ENCODE measurements at regions of chr22 and their contacts with region 1.

Region 1: DNA sequence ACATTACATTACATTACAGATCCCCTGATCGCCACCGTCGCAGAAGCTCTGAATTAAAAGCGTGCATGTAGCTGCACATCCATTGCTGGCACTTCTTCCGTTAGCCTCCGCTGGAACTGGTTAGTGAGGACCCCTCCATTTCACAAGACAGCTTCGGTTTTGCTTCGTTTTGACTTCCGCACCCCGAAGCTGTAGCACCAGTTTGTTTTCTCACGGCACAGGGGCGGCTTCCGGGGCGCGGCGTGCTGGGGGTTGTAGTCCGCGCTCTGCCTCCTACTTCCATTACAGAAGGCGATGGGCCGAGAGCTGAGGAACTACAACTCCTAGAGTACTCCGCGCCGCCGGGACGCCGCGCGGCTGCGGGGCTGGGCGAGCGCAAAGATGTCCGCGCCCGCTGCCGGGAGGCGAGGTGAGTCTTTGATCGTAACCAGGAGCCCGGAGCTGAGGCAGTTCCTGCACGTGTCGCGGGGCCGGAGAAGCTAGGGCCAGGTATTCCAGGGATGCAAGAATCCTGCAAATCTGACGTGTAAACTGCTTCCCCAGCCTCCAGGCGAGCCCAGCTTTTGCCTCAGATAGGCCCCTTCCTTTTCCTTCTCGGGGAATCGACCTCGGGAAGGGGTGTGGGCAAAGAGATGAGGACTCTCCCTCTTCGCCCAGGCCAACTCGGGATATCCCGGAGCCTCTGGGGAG is at the start of gene PEX26:
- DNase-seq: peak; percentile 84
- ATAC-seq: peak; percentile 96
- H3K4me3 ChIP-seq: peak within 1 kb of the TSS; percentile 92
- H3K27ac ChIP-seq: peak within 1 kb of the TSS; percentile 94
- H3K4me1 ChIP-seq: no peaks in the 10 kb centered on the region
- H3K27me3 ChIP-seq: no peaks in the 10 kb centered on the region
- CTCF ChIP-seq: no peak
- EP300 ChIP-seq: no peak
- POLR2A ChIP-seq: peak; percentile 90
- RAD21 ChIP-seq: no peak
- polyA plus RNA-seq, gene PEX26: 0.79 to 1.1 TPM

Region 2: GRCh38 chr22:17754233-17754925 is 323.4 kb before region 1 on chr22:
- CTCF ChIA-PET with region 1: no interaction called
- POLR2A ChIA-PET with region 1: interaction called, 10 read pairs
- RAD21 ChIA-PET with region 1: interaction called, 6 read pairs
- SMC1A ChIA-PET with region 1: interaction called, 4 read pairs
- in situ Hi-C with region 1: no loop called
- intact Hi-C with region 1: no loop called
- DNase-seq: no peak
- ATAC-seq: peak; percentile 82
- H3K4me3 ChIP-seq: no peak overlapping the region
- H3K27ac ChIP-seq: no peak overlapping the region
- H3K4me1 ChIP-seq: no peaks in the 10 kb centered on the region
- H3K27me3 ChIP-seq: no peaks in the 10 kb centered on the region
- CTCF ChIP-seq: peak; percentile 30 to 57 (median 52); a peak in 4 of 6 replicates
- EP300 ChIP-seq: no peak
- POLR2A ChIP-seq: no peak
- RAD21 ChIP-seq: peak; percentile 45; the same call in 1 of the 2 replicates

Region 3: GRCh38 chr22:17830043-17830961 is 247.5 kb before region 1 on chr22:
- CTCF ChIA-PET with region 1: interaction called, 167 read pairs
- POLR2A ChIA-PET with region 1: interaction called, 5 read pairs
- RAD21 ChIA-PET with region 1: interaction called, 77 read pairs
- SMC1A ChIA-PET with region 1: interaction called, 93 read pairs
- in situ Hi-C with region 1: no loop called
- intact Hi-C with region 1: loop called (anchors 1 kb)
- DNase-seq: peak; percentile 51
- ATAC-seq: peak; percentile 97
- H3K4me3 ChIP-seq: no peak overlapping the region
- H3K27ac ChIP-seq: no peak overlapping the region
- H3K4me1 ChIP-seq: no peaks in the 10 kb centered on the region
- H3K27me3 ChIP-seq: no peaks in the 10 kb centered on the region
- CTCF ChIP-seq: peak; percentile 98 to 99 (median 98)
- EP300 ChIP-seq: no peak
- POLR2A ChIP-seq: no peak
- RAD21 ChIP-seq: peak; percentile 97

Region 4: GRCh38 chr22:17964643-17965042 is 113.1 kb before region 1 on chr22:
- CTCF ChIA-PET with region 1: interaction called, 11 read pairs
- POLR2A ChIA-PET with region 1: no interaction called
- RAD21 ChIA-PET with region 1: interaction called, 16 read pairs
- SMC1A ChIA-PET with region 1: interaction called, 24 read pairs
- in situ Hi-C with region 1: no loop called
- intact Hi-C with region 1: loop called (anchors 2 kb)
- DNase-seq: peak; percentile 65
- ATAC-seq: peak; percentile 95
- H3K4me3 ChIP-seq: peak overlapping the region; percentile 41; the same call in 1 of the 2 replicates
- H3K27ac ChIP-seq: peak overlapping the region; percentile 67
- H3K4me1 ChIP-seq: peaks cover 28% of the 10 kb centered on the region
- H3K27me3 ChIP-seq: no peaks in the 10 kb centered on the region
- CTCF ChIP-seq: peak in 1 of 3 experiments; percentile 8; a peak in 1 of 6 replicates
- EP300 ChIP-seq: peak in 1 of 2 experiments; percentile 34; a peak in 1 of 4 replicates
- POLR2A ChIP-seq: peak; percentile 50; the same call in 1 of the 2 replicates
- RAD21 ChIP-seq: peak; percentile 34

Region 5: DNA sequence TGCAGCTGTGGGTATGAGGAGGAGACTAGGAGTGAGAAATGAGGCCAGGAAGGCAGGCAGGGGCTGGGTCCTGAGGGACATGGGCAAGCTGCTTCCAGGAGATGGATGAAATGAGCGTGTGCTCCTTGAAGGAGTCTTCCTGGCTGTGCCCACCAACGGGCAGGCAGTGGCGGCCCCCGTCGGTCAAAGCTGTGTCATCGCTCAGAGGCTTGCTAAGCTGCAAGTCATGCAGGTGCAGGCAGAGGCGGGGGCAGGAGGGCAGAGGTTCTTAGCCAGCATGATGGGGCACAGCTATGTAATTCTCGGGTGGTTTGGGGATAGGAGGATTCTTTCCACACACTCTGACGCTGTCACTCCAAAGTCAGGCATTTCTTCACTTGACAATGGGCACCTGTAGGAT is 12.5 kb before region 1 on chr22:
- CTCF ChIA-PET with region 1: interaction called, 34 read pairs
- POLR2A ChIA-PET with region 1: interaction called, 8 read pairs
- RAD21 ChIA-PET with region 1: interaction called, 40 read pairs
- SMC1A ChIA-PET with region 1: interaction called, 51 read pairs
- in situ Hi-C with region 1: no loop called
- intact Hi-C with region 1: no loop called
- DNase-seq: no peak
- ATAC-seq: peak; percentile 30
- H3K4me3 ChIP-seq: no peak overlapping the region
- H3K27ac ChIP-seq: no peak overlapping the region
- H3K4me1 ChIP-seq: peaks cover 17% of the 10 kb centered on the region
- H3K27me3 ChIP-seq: no peaks in the 10 kb centered on the region
- CTCF ChIP-seq: peak in 1 of 3 experiments; percentile 19; a peak in 1 of 6 replicates
- EP300 ChIP-seq: no peak
- POLR2A ChIP-seq: no peak
- RAD21 ChIP-seq: no peak

Region 6: GRCh38 chr22:18133452-18133851 is 55.7 kb after region 1 on chr22:
- CTCF ChIA-PET with region 1: no interaction called
- POLR2A ChIA-PET with region 1: no interaction called
- RAD21 ChIA-PET with region 1: no interaction called
- SMC1A ChIA-PET with region 1: no interaction called
- in situ Hi-C with region 1: no loop called
- intact Hi-C with region 1: no loop called
- DNase-seq: no peak
- ATAC-seq: no peak
- H3K4me3 ChIP-seq: no peak overlapping the region
- H3K27ac ChIP-seq: no peak overlapping the region
- H3K4me1 ChIP-seq: no peaks in the 10 kb centered on the region
- H3K27me3 ChIP-seq: no peaks in the 10 kb centered on the region
- CTCF ChIP-seq: no peak
- EP300 ChIP-seq: no peak
- POLR2A ChIP-seq: no peak
- RAD21 ChIP-seq: no peak

Region 7: DNA sequence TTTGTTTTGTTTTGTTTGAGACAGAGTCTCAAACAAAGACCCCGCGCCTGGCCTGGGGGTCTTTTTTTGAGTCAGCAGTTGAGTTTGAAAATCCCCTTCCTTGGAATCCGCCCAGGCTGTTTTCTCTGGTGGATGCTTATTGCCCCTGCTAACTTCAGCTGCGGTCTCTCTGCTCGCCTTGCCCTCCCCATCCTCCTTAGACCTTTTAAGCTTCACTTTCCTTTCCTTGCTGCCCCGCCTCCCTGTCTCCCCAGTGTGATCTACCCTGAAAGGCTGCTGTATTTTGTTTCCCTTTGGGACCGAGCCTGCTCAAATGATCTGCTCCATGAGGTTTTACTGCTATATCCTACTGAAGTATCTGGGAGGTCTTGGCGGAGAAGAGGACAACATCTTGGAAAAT is 74.7 kb after region 1 on chr22:
- CTCF ChIA-PET with region 1: interaction called, 13 read pairs
- POLR2A ChIA-PET with region 1: interaction called, 10 read pairs
- RAD21 ChIA-PET with region 1: interaction called, 15 read pairs
- SMC1A ChIA-PET with region 1: interaction called, 9 read pairs
- in situ Hi-C with region 1: no loop called
- intact Hi-C with region 1: loop called (anchors 10 kb)
- DNase-seq: peak; percentile 26
- ATAC-seq: peak; percentile 69
- H3K4me3 ChIP-seq: peak overlapping the region; percentile 75
- H3K27ac ChIP-seq: peak overlapping the region; percentile 72
- H3K4me1 ChIP-seq: peaks cover 2% of the 10 kb centered on the region; the same call in 1 of the 2 replicates
- H3K27me3 ChIP-seq: no peaks in the 10 kb centered on the region
- CTCF ChIP-seq: no peak
- EP300 ChIP-seq: no peak
- POLR2A ChIP-seq: peak; percentile 33; the same call in 1 of the 2 replicates
- RAD21 ChIP-seq: no peak